ENCODE measurements at regions of chrX and their contacts with region 1.

Region 1: GRCh38 chrX:49043220-49043986 is at the start of gene TFE3:
- DNase-seq: peak; percentile 96 to 98
- H3K4me3 ChIP-seq: peak within 1 kb of the TSS; percentile 79
- H3K4me3 Mint-ChIP-seq: peak within 1 kb of the TSS; percentile 88
- H3K27ac Mint-ChIP-seq: peak within 1 kb of the TSS; percentile 95
- H3K4me1 ChIP-seq: peaks cover 16% of the 10 kb centered on the region
- H3K4me1 Mint-ChIP-seq: peaks cover 7% of the 10 kb centered on the region
- H3K27me3 ChIP-seq: no peaks in the 10 kb centered on the region
- H3K27me3 Mint-ChIP-seq: no peaks in the 10 kb centered on the region
- CTCF ChIP-seq: peak; percentile 41 to 48
- total RNA-seq, gene TFE3: 28.1 and 32.0 TPM in 2 replicates

Region 2: DNA sequence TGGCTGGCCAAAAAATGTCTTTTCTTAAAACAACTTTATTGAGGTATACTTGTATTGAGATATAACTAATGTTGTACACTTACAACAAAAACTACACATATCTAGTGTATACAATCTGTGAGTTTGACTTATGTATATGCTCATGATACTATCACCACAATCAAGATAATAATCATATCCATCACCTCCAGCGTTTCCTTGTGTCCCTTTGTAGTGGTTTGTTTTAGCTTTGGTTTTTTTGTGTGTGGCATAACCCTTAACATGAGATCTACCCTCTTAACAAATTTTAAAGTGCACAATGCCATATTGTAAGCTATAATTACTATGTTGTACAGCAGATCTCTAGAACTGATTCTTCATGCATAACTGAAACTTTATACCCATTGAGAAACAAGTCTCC is 194.6 kb before region 1 on chrX:
- CTCF ChIA-PET with region 1: no interaction called
- POLR2A ChIA-PET with region 1: no interaction called
- intact Hi-C with region 1: no loop called
- DNase-seq: no peak
- H3K4me3 ChIP-seq: no peak overlapping the region
- H3K4me3 Mint-ChIP-seq: no peak overlapping the region
- H3K27ac Mint-ChIP-seq: no peak overlapping the region
- H3K4me1 ChIP-seq: no peaks in the 10 kb centered on the region; the same call in 1 of the 2 replicates
- H3K4me1 Mint-ChIP-seq: peaks cover 7% of the 10 kb centered on the region
- H3K27me3 ChIP-seq: no peaks in the 10 kb centered on the region
- H3K27me3 Mint-ChIP-seq: no peaks in the 10 kb centered on the region
- CTCF ChIP-seq: no peak

Region 3: GRCh38 chrX:48897621-48898306 is 145.6 kb before region 1 on chrX and contains the starts of genes PQBP1 and TIMM17B:
- CTCF ChIA-PET with region 1: no interaction called
- POLR2A ChIA-PET with region 1: interaction called, 4 read pairs
- intact Hi-C with region 1: loop called (anchors 5 kb)
- DNase-seq: peak; percentile 91 to 94
- H3K4me3 ChIP-seq: peak within 1 kb of the TSS; percentile 90
- H3K4me3 Mint-ChIP-seq: peak within 1 kb of the TSS; percentile 89
- H3K27ac Mint-ChIP-seq: peak within 1 kb of the TSS; percentile 98
- H3K4me1 ChIP-seq: no peaks in the 10 kb centered on the region
- H3K4me1 Mint-ChIP-seq: no peaks in the 10 kb centered on the region
- H3K27me3 ChIP-seq: no peaks in the 10 kb centered on the region
- H3K27me3 Mint-ChIP-seq: no peaks in the 10 kb centered on the region
- CTCF ChIP-seq: no peak
- total RNA-seq, gene PQBP1: 111 and 114 TPM in 2 replicates
- total RNA-seq, gene TIMM17B: 82.5 and 90.6 TPM in 2 replicates

Region 4: DNA sequence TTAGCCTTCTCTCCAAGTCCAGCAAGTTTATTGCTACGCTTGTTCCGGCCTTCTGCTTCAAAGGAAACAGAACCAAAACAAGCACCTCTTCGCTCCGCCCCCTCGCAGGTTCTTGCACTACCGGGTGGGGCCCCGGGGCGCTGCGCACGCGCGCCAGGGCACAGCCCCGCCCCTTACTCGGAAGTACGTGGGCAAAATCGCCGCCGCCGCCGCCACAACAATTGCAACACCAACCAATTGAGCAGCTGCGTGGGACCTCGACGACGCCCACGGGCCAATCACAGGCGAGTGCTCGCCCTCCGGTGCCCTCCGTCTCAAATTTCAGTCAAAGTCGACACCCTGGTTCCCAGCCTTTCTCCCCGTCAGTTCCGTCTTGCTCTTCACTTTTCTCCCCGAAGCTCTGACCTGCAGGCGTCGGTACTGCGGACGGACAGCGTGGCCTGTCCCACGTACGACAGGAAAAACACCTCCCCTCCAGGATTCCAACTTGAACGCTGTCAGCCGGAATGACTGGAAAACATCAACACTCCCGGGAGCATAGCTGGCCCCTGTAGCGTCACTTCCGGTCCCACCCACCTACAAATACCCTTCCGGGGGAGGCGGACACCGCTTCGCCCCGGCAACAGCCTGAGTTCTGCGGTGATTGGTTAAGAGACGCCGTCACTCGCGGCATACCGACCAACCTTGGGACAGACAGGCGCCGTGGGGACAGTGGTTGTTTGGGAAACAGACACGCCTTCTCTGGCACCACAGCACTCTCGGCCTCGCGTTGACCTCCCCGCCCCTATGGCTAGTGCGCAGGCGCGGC is 85.4 kb before region 1 on chrX:
- CTCF ChIA-PET with region 1: no interaction called
- POLR2A ChIA-PET with region 1: interaction called, 11 read pairs
- intact Hi-C with region 1: loop called (anchors 2 kb)
- DNase-seq: peak; percentile 94 to 97
- H3K4me3 ChIP-seq: peak overlapping the region; percentile 73
- H3K4me3 Mint-ChIP-seq: peak overlapping the region; percentile 98
- H3K27ac Mint-ChIP-seq: peak overlapping the region; percentile 100
- H3K4me1 ChIP-seq: no peaks in the 10 kb centered on the region
- H3K4me1 Mint-ChIP-seq: peaks cover 15% of the 10 kb centered on the region
- H3K27me3 ChIP-seq: no peaks in the 10 kb centered on the region
- H3K27me3 Mint-ChIP-seq: no peaks in the 10 kb centered on the region
- CTCF ChIP-seq: no peak

Region 5: DNA sequence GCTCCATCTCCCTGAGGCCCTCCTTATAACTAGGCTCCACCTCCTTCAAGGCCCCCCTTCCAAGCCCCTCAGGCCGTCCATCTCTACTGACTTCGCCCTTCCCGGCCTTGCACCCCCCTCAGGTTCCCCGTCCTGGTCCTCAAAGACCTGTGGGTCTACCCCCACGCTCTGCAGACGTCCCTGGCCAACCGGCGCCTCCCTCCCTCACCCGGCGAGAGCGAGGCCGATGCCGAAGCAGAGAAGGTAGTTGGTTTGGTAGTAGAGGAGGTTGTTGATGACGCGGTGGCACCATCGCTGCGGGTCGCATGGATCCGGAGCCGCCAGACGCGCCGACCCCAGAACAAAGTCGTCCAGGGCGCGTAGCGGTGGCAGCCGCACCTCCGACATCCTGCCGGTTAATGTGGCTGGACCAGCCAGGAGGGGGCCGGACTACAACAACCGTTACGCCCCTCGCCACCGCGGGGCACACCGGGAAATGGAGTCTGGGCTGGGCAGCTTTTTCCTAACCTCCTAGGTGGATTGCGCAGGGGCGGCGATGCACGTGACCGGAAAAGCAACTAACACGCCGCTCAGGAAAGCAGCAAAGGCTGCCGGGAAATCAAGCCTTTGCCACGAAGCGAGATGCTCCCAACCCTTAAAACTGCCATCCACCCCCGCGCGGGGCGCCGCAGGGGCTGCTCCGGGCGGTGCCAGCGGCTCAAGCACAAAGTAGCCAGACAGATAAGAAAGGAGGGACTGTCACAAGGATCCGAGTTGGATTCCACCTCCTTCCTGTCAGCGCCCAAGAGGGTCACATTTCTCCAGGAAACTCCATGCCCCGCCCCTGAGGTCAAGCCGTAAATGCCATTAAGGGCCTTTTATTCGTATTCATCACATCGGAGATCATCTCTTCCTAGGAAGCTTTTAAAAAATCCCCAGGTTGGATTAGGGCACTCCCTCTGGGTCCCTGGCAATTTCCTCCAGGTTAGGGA is 30.5 kb after region 1 on chrX and contains the start of gene PRAF2:
- CTCF ChIA-PET with region 1: no interaction called
- POLR2A ChIA-PET with region 1: no interaction called
- intact Hi-C with region 1: loop called (anchors 1 kb)
- DNase-seq: peak; percentile 91 to 92
- H3K4me3 ChIP-seq: peak within 1 kb of the TSS; percentile 50
- H3K4me3 Mint-ChIP-seq: peak within 1 kb of the TSS; percentile 72
- H3K27ac Mint-ChIP-seq: peak within 1 kb of the TSS; percentile 45
- H3K4me1 ChIP-seq: no peaks in the 10 kb centered on the region
- H3K4me1 Mint-ChIP-seq: peaks cover 12% of the 10 kb centered on the region
- H3K27me3 ChIP-seq: no peaks in the 10 kb centered on the region
- H3K27me3 Mint-ChIP-seq: no peaks in the 10 kb centered on the region
- CTCF ChIP-seq: no peak
- total RNA-seq, gene PRAF2: 3.2 and 5.4 TPM in 2 replicates

Region 6: GRCh38 chrX:49163555-49164419 is 120.4 kb after region 1 on chrX:
- CTCF ChIA-PET with region 1: no interaction called
- POLR2A ChIA-PET with region 1: no interaction called
- intact Hi-C with region 1: loop called (anchors 1 kb)
- DNase-seq: peak; percentile 88 to 89
- H3K4me3 ChIP-seq: peak overlapping the region; percentile 41
- H3K4me3 Mint-ChIP-seq: peak overlapping the region; percentile 73
- H3K27ac Mint-ChIP-seq: peak overlapping the region; percentile 89
- H3K4me1 ChIP-seq: no peaks in the 10 kb centered on the region
- H3K4me1 Mint-ChIP-seq: peaks cover 7% of the 10 kb centered on the region
- H3K27me3 ChIP-seq: no peaks in the 10 kb centered on the region
- H3K27me3 Mint-ChIP-seq: no peaks in the 10 kb centered on the region
- CTCF ChIP-seq: peak; percentile 25 to 53